Vagina (tissue), 2 donors: ENCODE measurements at regions of chrX and their contacts with region 1.

Region 1: GRCh38 chrX:113075521-113075920 is 234.9 kb upstream of the AMOT start:
- DNase-seq: no peak
- H3K4me3 ChIP-seq: no peak overlapping the region
- H3K27ac ChIP-seq: no peak overlapping the region
- H3K4me1 ChIP-seq: no peaks in the 10 kb centered on the region
- H3K27me3 ChIP-seq: no peaks in the 10 kb centered on the region
- CTCF ChIP-seq: no peak
- POLR2A ChIP-seq: no peak

Region 2: GRCh38 chrX:111719426-111720210 is 1355.9 kb before region 1 on chrX:
- intact Hi-C with region 1: loop called (anchors 10 kb)
- DNase-seq: no peak
- H3K4me3 ChIP-seq: no peak overlapping the region
- H3K27ac ChIP-seq: no peak overlapping the region
- H3K4me1 ChIP-seq: no peaks in the 10 kb centered on the region
- H3K27me3 ChIP-seq: no peaks in the 10 kb centered on the region
- CTCF ChIP-seq: no peak
- POLR2A ChIP-seq: no peak

Region 3: GRCh38 chrX:113330416-113330815 is 254.9 kb after region 1 on chrX:
- intact Hi-C with region 1: no loop called
- DNase-seq: no peak
- H3K4me3 ChIP-seq: no peak overlapping the region
- H3K27ac ChIP-seq: no peak overlapping the region
- H3K4me1 ChIP-seq: no peaks in the 10 kb centered on the region
- H3K27me3 ChIP-seq: no peaks in the 10 kb centered on the region
- CTCF ChIP-seq: no peak
- POLR2A ChIP-seq: no peak